ENCODE measurements at regions of chr6 and their contacts with region 1.

Region 1: DNA sequence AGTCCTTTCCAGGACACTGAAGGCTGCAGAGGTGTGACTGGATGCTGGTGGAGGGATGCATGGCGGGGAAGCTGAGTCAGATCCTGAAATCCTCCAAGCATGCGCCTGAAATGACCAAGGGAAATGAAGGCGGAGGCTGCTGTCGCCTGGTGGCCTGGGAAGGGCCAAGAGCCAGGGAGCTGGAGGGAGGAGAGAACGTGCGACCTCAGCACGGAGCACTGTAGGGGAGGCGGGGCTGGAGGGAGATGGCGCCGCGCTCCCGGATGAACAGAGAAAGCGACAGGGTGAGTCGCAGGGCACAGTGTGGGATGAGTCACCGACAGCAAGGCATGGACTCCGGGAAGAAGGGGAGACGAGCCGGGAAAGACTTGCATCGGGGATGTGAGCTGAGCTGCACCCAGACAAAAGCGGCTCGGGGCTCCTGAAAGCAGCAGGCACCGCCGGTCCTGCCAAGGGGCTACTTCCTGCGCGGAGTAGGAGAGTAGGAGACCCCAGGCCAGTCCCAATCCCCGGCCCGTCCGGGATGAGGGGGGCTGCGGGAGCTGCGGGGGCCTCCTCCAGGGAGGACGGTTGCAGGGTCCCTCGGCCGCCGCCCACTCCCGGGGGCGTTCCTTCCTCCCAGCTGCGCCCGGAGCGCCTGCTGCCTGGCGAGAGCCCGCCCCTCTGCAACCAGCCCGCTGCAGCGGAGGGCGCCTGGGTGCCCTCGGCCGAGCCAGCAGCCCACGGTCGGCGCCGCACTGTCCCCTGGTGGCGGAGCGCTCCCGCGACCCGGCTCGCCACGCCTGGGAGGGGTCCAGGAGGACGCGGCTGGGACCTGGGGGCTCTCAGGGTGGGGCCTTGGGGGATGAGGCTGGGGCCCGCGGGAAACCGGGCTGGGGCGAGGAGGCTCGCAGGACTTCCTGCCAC is 11.0 kb upstream of the NQO2 start:
- DNase-seq: peak; percentile 87
- ATAC-seq: peak; percentile 74
- H3K4me3 Mint-ChIP-seq: peak overlapping the region; percentile 87
- H3K27ac Mint-ChIP-seq: peak overlapping the region; percentile 94
- H3K4me1 Mint-ChIP-seq: peaks cover 20% of the 10 kb centered on the region
- H3K27me3 Mint-ChIP-seq: no peaks in the 10 kb centered on the region

Region 2: GRCh38 chr6:2848851-2849250 is 139.8 kb before region 1 on chr6:
- POLR2A ChIA-PET with region 1: interaction called, 29 read pairs
- DNase-seq: peak; percentile 61
- ATAC-seq: peak; percentile 81
- H3K4me3 Mint-ChIP-seq: peak overlapping the region; percentile 66
- H3K27ac Mint-ChIP-seq: peak overlapping the region; percentile 90
- H3K4me1 Mint-ChIP-seq: peaks cover 37% of the 10 kb centered on the region
- H3K27me3 Mint-ChIP-seq: no peaks in the 10 kb centered on the region

Region 3: DNA sequence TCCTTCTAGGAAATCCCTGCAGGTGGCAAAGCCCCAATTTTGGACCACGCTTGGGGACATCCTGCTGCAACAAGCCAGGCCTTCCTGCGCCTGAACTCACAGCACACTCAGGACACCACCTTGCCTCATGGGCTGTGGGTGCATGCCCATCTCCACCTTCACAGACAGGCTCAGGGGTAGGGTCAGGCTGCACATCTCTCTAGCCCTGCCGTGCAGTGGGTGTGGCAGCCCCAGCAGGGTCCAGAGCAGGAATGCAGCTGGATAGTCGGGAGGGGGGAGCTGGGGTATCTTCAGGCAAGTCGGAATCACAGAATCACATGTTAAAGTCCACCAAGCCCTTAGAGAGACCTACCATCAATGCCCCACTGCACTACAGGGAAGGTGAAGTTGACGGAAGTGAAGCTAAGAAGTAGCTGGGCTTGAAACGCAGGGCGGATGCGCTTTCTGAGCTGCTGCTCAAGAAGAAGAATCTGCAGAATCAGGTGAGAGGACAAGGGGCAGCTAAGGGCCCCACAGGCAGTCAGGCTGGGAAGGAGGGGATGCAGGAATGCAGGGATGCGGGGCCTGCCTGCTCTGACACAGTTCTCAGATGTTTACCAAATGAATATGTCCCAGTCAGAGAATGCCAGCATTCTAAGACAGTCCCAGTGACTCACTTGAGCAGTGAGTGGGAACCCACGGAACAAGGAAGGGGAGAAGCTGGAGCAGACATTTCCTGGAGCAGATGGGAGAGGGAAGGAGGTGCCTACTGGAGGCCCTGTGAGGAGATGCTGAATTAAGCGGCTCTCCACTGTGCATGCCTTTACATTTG is 28.6 kb before region 1 on chr6:
- POLR2A ChIA-PET with region 1: no interaction called
- DNase-seq: no peak
- ATAC-seq: no peak
- H3K4me3 Mint-ChIP-seq: no peak overlapping the region
- H3K27ac Mint-ChIP-seq: no peak overlapping the region
- H3K4me1 Mint-ChIP-seq: peaks cover 11% of the 10 kb centered on the region
- H3K27me3 Mint-ChIP-seq: no peaks in the 10 kb centered on the region

Region 4: DNA sequence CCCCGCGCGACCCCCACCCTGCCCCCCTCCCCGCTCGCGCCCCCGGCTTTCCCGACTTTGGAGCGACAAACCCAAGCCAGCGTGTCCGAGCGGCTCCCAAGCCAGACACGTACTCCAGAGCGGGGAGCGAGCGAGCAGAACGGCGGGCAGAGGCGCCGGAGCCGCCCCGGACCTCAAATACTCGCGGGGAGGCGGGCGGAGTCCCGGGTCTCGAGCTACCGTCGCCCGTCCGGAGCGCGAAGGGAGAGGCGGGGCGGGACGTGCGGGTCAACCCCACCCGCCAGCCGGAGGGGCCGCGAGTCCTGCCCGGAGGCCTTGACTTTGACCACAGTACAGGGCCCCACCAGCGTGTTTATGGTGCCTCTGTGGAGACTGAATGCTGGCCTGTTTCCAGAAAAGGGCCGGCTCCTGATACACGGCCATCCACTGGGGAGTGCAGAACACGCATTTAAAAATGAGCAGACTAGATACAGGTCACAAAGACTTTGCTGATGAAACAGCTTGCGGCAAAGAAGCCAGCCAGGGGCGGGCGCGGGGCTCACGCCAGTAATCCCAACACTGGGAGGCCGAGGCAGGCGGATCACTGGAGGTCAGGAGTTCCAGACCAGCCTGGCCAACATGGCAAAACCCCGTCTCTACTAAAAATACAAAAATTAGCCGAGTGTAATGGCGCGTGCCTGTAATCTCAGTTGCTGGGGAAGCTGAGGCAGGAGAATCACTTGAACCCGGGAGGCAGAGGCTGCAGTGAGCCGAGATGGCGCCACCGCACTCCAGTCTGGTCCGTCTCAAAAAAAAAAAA is 17.1 kb before region 1 on chr6 and contains the start of gene SERPINB6:
- POLR2A ChIA-PET with region 1: interaction called, 32 read pairs
- DNase-seq: peak; percentile 72
- ATAC-seq: peak; percentile 66
- H3K4me3 Mint-ChIP-seq: peak within 1 kb of the TSS; percentile 90
- H3K27ac Mint-ChIP-seq: peak within 1 kb of the TSS; percentile 85
- H3K4me1 Mint-ChIP-seq: peaks cover 26% of the 10 kb centered on the region
- H3K27me3 Mint-ChIP-seq: peaks cover 5% of the 10 kb centered on the region
- total RNA-seq, gene SERPINB6: 85.3 to 85.6 TPM

Region 5: GRCh38 chr6:3023663-3024483 is 35.2 kb after region 1 on chr6:
- POLR2A ChIA-PET with region 1: interaction called, 16 read pairs
- DNase-seq: peak; percentile 88
- ATAC-seq: peak; percentile 85
- H3K4me3 Mint-ChIP-seq: peak overlapping the region; percentile 90
- H3K27ac Mint-ChIP-seq: peak overlapping the region; percentile 92
- H3K4me1 Mint-ChIP-seq: peaks cover 40% of the 10 kb centered on the region
- H3K27me3 Mint-ChIP-seq: peaks cover under 1% of the 10 kb centered on the region

Region 6: DNA sequence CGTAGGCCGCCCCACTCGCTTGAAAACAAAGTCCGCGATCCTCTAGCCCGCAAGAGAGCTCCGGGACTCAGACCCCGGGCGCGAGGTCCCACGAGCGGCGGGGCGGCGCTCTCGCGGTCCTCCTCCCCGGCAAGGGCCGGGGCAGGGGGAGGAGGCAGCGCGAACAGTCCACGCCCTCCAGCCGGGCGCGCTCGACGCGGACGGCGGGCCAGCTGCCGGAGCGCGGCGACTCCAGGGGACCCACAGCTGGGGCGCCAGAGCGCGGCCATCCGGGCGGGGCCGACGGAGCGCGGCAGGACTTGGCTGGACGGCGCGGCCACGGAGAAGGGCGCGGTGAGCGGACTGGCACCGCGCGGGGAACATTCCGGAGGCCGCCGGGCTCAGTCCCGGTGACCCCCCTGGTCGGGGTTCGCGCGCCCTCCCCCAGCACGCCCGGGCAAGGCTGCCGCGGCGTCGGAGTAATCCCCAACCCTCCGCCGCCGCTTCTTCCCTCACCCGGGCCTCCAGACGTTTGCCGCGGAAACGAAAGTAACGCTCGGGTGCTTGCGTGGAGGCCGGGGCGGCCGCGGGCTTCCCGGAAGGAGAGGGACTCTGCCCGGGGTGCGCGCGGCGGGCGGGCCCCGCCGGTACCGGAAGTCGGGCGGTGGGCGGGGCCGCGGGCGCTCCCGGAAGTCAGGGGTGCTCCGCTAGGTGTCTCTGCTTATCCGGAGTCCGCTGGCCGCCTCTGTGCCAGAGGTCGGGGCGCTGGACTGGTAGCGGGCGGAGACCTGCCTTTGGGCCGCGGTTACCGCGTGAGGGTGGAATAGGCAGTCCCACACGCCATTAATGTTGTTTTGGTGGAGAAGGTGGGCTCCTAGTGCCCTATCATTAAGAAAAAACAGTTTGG is 79.9 kb after region 1 on chr6 and contains the start of gene RIPK1:
- POLR2A ChIA-PET with region 1: interaction called, 37 read pairs
- DNase-seq: peak; percentile 99
- ATAC-seq: peak; percentile 80
- H3K4me3 Mint-ChIP-seq: peak within 1 kb of the TSS; percentile 95
- H3K27ac Mint-ChIP-seq: peak within 1 kb of the TSS; percentile 96
- H3K4me1 Mint-ChIP-seq: peaks cover 44% of the 10 kb centered on the region
- H3K27me3 Mint-ChIP-seq: no peaks in the 10 kb centered on the region
- total RNA-seq, gene RIPK1: 31.9 to 32.6 TPM

Measured in activated naive CD8-positive, alpha-beta T cell treated with anti-CD3 and anti-CD28 coated beads, Interleukin-2, amount 10 ng/mL, durations not matched to agents 7 days and 5 days (primary cell).